Dorsolateral prefrontal cortex (tissue), 120 donors: ENCODE measurements at regions of chr4 and their contacts with region 1.

Region 1: DNA sequence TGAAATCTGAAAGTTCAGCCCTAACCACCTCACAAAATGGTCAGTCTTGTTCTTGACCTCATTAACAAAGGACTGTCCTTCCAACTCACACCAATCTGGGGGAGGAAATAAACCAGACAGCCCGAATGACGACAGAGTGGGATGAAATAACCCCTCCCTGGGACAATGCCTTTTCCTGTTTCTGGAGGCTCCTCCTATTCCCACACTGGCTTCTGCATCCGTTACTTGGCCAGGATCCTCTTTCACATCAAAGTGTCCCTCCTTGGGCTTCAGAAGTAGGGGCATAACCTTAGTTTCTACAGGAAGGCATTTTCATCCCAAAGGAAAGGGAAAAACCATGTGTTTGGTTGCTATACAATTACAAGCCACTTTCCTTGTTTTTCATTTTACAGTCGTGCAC is 59.8 kb upstream of the RPL34 start:
- DNase-seq: no peak
- H3K4me3 ChIP-seq: no peak overlapping the region
- H3K27ac ChIP-seq: peak overlapping the region in 2 of 59 donors; percentile 13 to 40
- H3K27me3 ChIP-seq: no peaks in the 10 kb centered on the region
- CTCF ChIP-seq: no peak

Region 2: DNA sequence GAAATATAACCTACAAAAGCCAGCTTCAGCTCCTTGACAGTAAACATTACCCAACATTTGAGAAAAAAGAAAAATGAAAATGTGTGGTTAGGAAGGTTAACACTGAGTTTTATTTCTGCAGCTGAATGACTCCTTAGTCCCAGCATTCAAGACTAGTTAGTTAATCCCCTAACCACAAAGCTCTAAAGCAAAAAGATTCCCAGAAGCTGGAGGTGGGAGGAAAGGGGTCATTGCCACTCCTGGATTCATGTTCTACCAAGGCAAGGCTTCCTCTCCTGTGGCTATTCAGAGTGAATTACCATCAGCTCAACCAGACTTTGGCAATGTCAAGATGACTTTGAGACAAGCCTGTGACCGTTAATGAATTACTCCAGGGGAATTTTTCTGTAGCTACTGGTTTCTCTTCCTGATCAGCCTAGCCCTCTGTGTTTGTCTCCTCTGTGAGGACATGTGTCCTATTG is 507.3 kb before region 1 on chr4:
- intact Hi-C with region 1: loop called in 1 of 2 experiments (anchors 10 kb)
- DNase-seq: no peak
- H3K4me3 ChIP-seq: no peak overlapping the region
- H3K27ac ChIP-seq: no peak overlapping the region
- H3K27me3 ChIP-seq: no peaks in the 10 kb centered on the region
- CTCF ChIP-seq: no peak

Region 3: GRCh38 chr4:108060164-108060563 is 500.5 kb before region 1 on chr4:
- intact Hi-C with region 1: loop called (anchors 10 kb)
- DNase-seq: peak in 1 of 10 donors; percentile 17
- H3K4me3 ChIP-seq: peak overlapping the region in 1 of 59 donors; percentile 23
- H3K27ac ChIP-seq: peak overlapping the region in 4 of 59 donors; percentile 2 to 41 (median 10)
- H3K27me3 ChIP-seq: peaks cover 0 to 17% (median 0%) of the 10 kb centered on the region in 45 donors
- CTCF ChIP-seq: peak in 52 of 56 donors; percentile 14 to 73 (median 46)

Region 4: DNA sequence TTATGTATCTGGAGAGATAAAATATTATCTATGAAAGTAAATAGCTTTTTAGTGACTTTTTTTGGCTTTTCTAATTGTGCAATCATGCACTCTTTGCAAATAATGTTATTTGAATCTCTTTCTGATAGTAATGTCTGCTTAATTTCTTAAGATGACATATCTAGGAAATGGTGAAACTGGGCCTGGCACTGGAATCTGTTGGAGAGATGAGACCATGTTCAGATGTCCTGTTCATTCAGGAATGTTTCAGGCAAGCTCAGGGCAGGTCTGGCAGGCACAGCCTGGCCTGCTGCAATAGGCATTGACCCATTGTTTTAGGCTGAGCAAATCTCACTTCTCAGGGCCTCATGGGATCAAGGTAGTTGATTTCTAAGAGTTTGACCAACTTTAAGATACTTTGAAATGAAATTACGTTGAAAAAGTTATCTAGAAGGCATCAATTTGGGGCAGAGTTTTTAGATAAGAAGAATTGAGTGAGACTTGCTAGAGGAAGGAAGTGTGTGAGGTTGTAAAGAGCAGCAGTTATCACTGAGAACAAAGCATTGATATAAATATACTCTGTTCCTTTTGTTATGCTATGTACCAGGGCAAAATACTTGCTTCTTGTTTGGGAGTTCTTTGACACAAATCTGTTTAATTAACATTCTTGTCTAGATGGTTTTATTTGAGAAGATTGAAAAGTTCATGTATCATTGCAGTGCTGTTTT is 258.9 kb before region 1 on chr4:
- intact Hi-C with region 1: no loop called
- DNase-seq: no peak
- H3K4me3 ChIP-seq: no peak overlapping the region
- H3K27ac ChIP-seq: no peak overlapping the region
- H3K27me3 ChIP-seq: peaks cover 0 to 4% (median 0%) of the 10 kb centered on the region in 45 donors
- CTCF ChIP-seq: no peak